Right ventricle myocardium inferior (tissue), 1 donor: ENCODE measurements at regions of chrX and their contacts with region 1.

Region 1: DNA sequence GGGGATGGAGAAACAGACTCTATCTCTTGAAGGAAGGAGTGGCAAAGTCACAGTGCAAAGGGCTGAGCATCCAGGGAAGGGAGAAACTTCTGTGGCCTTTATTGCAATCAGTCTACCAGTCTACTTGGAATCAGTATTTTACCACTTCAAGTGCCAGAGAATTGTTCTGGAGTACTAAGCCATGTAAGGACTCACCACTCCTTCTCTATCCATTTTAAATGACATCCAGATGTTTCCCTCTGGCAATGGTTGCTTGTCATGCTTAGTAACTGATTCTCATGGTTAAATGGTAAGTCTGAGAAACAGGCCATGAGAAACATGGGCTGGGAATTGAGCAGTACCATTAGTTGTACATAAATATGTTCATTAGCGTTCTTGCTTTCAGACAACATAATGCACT is 21.1 kb upstream of the SMIM10 start:
- DNase-seq: no peak
- ATAC-seq: no peak

Region 2: DNA sequence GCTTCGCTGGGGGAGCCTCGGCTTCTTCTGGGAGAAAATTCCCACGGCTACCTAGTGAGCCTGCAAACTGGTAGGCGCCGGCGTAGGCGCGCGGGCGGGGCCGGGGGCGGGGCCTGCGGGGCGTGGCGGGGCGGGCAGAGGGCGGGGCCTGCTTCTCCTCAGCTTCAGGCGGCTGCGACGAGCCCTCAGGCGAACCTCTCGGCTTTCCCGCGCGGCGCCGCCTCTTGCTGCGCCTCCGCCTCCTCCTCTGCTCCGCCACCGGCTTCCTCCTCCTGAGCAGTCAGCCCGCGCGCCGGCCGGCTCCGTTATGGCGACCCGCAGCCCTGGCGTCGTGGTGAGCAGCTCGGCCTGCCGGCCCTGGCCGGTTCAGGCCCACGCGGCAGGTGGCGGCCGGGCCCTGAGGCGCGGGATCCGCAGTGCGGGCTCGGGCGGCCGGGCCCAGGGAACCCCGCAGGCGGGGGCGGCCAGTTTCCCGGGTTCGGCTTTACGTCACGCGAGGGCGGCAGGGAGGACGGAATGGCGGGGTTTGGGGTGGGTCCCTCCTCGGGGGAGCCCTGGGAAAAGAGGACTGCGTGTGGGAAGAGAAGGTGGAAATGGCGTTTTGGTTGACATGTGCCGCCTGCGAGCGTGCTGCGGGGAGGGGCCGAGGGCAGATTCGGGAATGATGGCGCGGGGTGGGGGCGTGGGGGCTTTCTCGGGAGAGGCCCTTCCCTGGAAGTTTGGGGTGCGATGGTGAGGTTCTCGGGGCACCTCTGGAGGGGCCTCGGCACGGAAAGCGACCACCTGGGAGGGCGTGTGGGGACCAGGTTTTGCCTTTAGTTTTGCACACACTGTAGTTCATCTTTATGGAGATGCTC is 509.5 kb before region 1 on chrX and contains the start of gene HPRT1:
- intact Hi-C with region 1: no loop called
- DNase-seq: peak; percentile 93
- ATAC-seq: peak; percentile 99
- total RNA-seq, gene HPRT1: 18.0 TPM

Region 3: GRCh38 chrX:134999469-134999868 is 29.7 kb after region 1 on chrX:
- intact Hi-C with region 1: loop called (anchors 2 kb)
- DNase-seq: no peak
- ATAC-seq: peak; percentile 49